ENCODE measurements at regions of chr22 and their contacts with region 1.

Region 1: DNA sequence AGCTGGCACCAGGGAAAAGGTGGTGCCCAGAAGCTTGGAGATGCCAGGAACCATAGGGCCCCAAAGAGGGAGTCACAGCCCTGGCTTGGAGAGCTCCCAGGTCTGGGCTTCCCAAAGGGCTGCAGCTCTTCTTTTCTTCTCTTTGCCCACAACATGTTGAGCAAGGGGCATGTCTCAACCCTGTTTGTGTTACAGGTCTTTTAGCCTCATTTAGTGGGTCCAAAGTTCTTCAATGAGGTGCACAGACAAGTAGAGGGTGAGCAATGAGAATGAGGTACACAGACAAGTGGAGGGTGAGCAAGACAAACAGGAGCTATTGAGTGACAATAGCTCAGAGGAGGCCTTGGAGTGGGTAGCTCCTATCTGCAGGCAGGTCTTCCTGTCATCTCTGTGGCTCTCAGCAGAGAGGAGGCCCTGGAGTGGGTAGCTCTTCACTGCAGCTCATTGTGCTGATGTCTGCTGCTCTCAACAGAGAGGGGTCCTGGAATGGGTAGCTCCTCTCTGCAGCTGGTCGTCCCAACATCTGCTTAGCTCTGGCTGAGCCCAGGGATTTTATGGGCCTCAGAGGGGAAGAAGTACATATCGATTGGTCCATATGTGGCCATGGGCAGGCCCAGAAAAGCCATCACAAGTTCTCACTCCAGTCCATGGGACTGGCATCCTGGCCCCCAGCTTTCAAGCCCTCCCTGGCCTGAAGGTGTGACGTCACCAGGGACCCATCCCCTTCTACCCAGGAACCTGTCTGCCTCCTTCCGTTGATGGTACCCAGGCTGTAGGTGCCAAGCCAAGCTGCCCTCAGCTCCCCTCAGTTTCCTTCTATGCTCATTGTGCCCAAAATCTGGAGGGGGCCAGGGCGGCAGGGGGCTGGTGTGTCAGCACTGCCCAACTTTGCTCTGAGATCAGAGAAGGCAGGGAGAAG is 34.9 kb downstream of the WBP2NL start:
- DNase-seq: no peak
- ATAC-seq: no peak
- H3K4me3 ChIP-seq: no peak overlapping the region
- H3K27ac ChIP-seq: no peak overlapping the region
- H3K4me1 ChIP-seq: peaks cover 22% of the 10 kb centered on the region
- H3K27me3 ChIP-seq: no peaks in the 10 kb centered on the region
- CTCF ChIP-seq: no peak
- EP300 ChIP-seq: no peak
- POLR2A ChIP-seq: no peak
- RAD21 ChIP-seq: no peak

Region 2: GRCh38 chr22:42079319-42080251 is 46.1 kb after region 1 on chr22 and contains the start of gene SMDT1:
- CTCF ChIA-PET with region 1: no interaction called
- POLR2A ChIA-PET with region 1: interaction called, 5 read pairs
- RAD21 ChIA-PET with region 1: interaction called, 4 read pairs
- SMC1A ChIA-PET with region 1: no interaction called
- in situ Hi-C with region 1: no loop called
- intact Hi-C with region 1: loop called (anchors 2 kb)
- DNase-seq: peak; percentile 99
- ATAC-seq: peak; percentile 95
- H3K4me3 ChIP-seq: peak within 1 kb of the TSS; percentile 81
- H3K27ac ChIP-seq: peak within 1 kb of the TSS; percentile 90
- H3K4me1 ChIP-seq: peaks cover 12% of the 10 kb centered on the region
- H3K27me3 ChIP-seq: no peaks in the 10 kb centered on the region
- CTCF ChIP-seq: no peak
- EP300 ChIP-seq: no peak
- POLR2A ChIP-seq: peak; percentile 94
- RAD21 ChIP-seq: no peak
- polyA plus RNA-seq, gene SMDT1: 25.5 to 63.1 TPM

Region 3: GRCh38 chr22:42132457-42132856 is 98.9 kb after region 1 on chr22:
- CTCF ChIA-PET with region 1: no interaction called
- POLR2A ChIA-PET with region 1: no interaction called
- RAD21 ChIA-PET with region 1: no interaction called
- SMC1A ChIA-PET with region 1: no interaction called
- in situ Hi-C with region 1: no loop called
- intact Hi-C with region 1: no loop called
- DNase-seq: no peak
- ATAC-seq: no peak
- H3K4me3 ChIP-seq: no peak overlapping the region
- H3K27ac ChIP-seq: no peak overlapping the region
- H3K4me1 ChIP-seq: no peaks in the 10 kb centered on the region
- H3K27me3 ChIP-seq: no peaks in the 10 kb centered on the region
- CTCF ChIP-seq: no peak
- EP300 ChIP-seq: no peak
- POLR2A ChIP-seq: no peak
- RAD21 ChIP-seq: no peak

Measured in GM12878 (cell line).